Colonic mucosa (tissue), 4 donors: ENCODE measurements at regions of chr1 and their contacts with region 1.

Region 1: DNA sequence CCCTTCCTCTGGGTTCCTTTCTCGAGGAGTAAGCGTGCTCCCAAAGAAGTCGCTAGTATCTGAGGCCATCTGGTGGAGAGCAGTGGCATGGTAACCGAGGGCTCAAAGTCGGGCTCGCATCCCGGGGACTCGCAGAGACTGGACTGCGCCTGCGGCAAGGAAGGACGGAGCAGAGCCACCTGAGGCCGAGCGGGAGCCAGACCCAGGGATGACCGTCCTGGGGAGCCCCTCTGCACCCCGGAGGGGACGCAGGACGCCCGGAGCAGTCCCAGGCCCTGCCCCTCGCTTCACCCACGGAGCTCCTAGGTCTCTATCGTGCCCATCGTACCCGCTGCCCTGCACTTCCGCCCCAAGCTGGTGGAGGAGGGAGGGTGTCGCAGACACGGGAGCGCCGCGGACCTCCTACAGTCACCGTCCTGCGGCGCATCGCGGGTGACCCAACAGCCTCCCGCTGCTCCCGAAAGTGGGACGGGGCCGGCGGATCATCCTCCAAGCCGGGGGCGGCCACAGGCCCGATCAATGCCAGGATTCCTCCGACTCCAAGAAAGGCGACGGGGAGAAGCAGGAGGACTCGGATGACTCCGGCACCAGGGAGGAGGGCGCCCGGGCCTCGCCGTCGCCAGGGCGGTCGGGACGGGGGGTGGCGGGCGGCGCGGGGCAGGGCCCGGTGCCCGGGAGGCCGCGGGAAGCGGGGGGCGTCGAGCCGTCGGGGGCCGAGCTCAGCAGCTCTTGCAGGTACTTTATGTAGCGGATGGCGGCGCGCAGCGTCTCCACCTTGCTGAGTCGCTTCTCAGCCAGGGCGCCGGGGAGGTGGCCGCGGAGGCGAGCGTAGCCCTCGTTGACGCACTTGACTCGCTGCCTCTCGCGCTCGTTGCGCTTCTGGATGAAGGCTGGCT is 2.3 kb upstream of the CACNA1S start:
- DNase-seq: peak; percentile 93
- H3K4me3 ChIP-seq: peak overlapping the region; percentile 51
- H3K27ac ChIP-seq: no peak overlapping the region
- H3K4me1 ChIP-seq: no peaks in the 10 kb centered on the region
- H3K27me3 ChIP-seq: peaks cover 5% of the 10 kb centered on the region
- CTCF ChIP-seq: peak; percentile 69

Region 2: GRCh38 chr1:200971955-200972711 is 142.4 kb before region 1 on chr1:
- intact Hi-C with region 1: loop called (anchors 1 kb)
- DNase-seq: peak; percentile 72
- H3K4me3 ChIP-seq: no peak overlapping the region
- H3K27ac ChIP-seq: no peak overlapping the region
- H3K4me1 ChIP-seq: no peaks in the 10 kb centered on the region
- H3K27me3 ChIP-seq: no peaks in the 10 kb centered on the region
- CTCF ChIP-seq: peak; percentile 99

Region 3: GRCh38 chr1:201229771-201230635 is 115.5 kb after region 1 on chr1:
- intact Hi-C with region 1: no loop called
- DNase-seq: no peak
- H3K4me3 ChIP-seq: no peak overlapping the region
- H3K27ac ChIP-seq: no peak overlapping the region
- H3K4me1 ChIP-seq: no peaks in the 10 kb centered on the region
- H3K27me3 ChIP-seq: no peaks in the 10 kb centered on the region
- CTCF ChIP-seq: no peak